Cardiac septum (tissue), 1 donor: ENCODE measurements at regions of chr3 and their contacts with region 1.

Region 1: GRCh38 chr3:102301155-102301880 is 133.5 kb upstream of the ZPLD1 start:
- DNase-seq: no peak

Region 2: GRCh38 chr3:101902041-101902440 is 399.3 kb before region 1 on chr3:
- intact Hi-C with region 1: no loop called
- DNase-seq: no peak

Region 3: GRCh38 chr3:102841866-102842265 is 540.5 kb after region 1 on chr3:
- intact Hi-C with region 1: no loop called
- DNase-seq: no peak

Region 4: DNA sequence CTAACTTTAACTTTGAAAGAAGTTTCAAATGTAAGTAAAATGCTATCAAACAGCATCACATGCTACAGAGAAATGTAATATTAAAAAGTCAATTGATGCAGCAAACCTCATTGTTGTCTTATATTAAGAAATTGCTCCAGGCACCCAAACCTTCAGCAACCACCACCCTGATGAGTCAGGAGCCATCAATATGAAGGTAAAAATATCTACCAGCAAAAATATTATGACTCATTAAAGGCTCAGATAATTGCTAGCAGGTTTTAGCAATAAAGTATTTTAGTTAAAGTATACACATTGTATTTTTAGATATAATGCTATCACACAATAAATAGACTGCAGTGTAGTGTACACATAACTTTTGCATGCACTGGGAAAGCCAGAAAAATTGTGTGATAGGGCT is 879.9 kb after region 1 on chr3:
- intact Hi-C with region 1: loop called (anchors 10 kb)
- DNase-seq: no peak